Heart right ventricle (tissue), 16 donors: ENCODE measurements at regions of chr9 and their contacts with region 1.

Region 1: GRCh38 chr9:91407580-91408318 is 15.9 kb downstream of the NFIL3 start:
- DNase-seq: no peak
- ATAC-seq: peak in 6 of 8 donors; percentile 51 to 87 (median 80)
- H3K4me3 ChIP-seq: no peak overlapping the region
- H3K27ac ChIP-seq: peak overlapping the region in 5 of 10 donors; percentile 7 to 43 (median 31)
- H3K4me1 ChIP-seq: peaks cover 0 to 48% (median 0%) of the 10 kb centered on the region in 9 donors
- H3K27me3 ChIP-seq: no peaks in the 10 kb centered on the region
- CTCF ChIP-seq: no peak

Region 2: DNA sequence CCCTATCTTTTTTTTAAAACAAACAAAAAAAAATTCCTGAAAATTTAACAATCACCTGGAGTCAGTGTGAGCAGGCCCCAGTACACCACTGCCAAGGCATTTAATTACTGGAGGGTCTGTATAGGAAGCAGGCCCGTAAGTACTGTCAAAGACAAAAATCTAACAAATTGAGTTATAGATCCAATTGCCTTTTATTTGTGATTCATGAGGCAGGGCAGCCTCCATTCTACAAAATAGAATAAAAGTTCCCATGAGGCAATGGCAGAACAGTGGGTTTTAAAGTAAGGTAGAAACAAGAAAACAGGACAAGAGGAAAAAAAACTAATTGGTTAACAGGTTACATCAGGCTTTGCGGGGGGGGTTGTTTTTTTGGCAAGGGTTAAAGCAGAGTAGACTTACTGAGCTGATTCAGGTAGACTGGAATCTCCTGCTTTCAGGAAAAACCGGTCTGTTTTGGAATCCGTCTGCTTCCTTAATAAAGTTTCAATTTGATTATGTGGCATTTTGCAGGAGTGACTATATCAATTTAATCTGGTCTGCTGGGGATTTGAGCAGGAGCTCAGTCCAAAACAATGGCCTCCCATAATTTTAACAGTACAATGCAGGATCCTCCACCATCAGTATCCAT is 94.9 kb before region 1 on chr9:
- intact Hi-C with region 1: no loop called
- DNase-seq: no peak
- ATAC-seq: no peak
- H3K4me3 ChIP-seq: no peak overlapping the region
- H3K27ac ChIP-seq: no peak overlapping the region
- H3K4me1 ChIP-seq: no peaks in the 10 kb centered on the region
- H3K27me3 ChIP-seq: no peaks in the 10 kb centered on the region
- CTCF ChIP-seq: no peak

Region 3: DNA sequence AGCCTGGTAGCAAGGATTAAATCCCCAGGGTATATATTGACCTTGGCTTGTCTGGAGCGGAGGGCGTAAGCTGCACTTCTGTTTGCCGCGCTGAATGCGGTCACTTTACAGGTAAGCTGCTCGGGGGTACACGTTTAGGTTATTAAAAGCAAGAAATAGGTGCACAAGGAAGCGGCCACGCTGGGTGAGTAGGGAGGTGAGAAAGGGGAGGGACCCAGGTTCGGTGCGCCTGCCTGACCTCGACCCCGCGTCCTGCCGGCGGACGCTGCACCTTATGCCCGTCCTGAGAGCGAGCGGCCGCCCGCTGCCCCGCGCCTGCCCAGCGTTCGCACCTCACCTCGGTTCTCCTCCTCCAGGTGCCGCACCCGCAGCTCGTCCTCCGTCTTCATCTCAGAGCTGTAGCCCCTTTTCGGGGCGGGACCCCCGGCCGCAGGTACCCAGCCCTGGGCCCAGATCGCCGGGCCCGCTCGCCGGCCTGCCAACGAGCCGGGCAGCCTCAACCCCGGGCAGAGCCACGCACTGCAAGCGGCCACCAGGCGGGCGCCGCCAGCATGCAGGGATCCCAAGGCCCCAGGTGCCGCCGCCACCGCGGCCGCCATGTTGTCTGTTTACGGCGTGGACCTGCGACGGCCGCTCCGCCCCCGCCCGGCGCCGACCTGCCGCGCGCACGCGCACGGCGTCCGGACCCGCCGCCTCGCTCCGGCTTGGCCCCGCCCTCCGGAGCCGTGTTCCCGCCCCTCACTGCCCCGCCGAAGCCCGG is 46.3 kb before region 1 on chr9 and contains the start of gene AUH:
- intact Hi-C with region 1: loop called in 2 of 10 experiments (anchors 5 to 10 kb)
- DNase-seq: peak; percentile 79 to 90
- ATAC-seq: peak; percentile 96 to 100 (median 98)
- H3K4me3 ChIP-seq: peak within 1 kb of the TSS; percentile 92 to 100 (median 98)
- H3K27ac ChIP-seq: peak within 1 kb of the TSS; percentile 85 to 97 (median 92)
- H3K4me1 ChIP-seq: peaks cover 0 to 43% (median 34%) of the 10 kb centered on the region in 9 donors
- H3K27me3 ChIP-seq: no peaks in the 10 kb centered on the region
- CTCF ChIP-seq: peak in 3 of 9 donors; percentile 7 to 17 (median 12)
- total RNA-seq, gene AUH: 30.6 to 51.3 (median 44.2) TPM

Region 4: DNA sequence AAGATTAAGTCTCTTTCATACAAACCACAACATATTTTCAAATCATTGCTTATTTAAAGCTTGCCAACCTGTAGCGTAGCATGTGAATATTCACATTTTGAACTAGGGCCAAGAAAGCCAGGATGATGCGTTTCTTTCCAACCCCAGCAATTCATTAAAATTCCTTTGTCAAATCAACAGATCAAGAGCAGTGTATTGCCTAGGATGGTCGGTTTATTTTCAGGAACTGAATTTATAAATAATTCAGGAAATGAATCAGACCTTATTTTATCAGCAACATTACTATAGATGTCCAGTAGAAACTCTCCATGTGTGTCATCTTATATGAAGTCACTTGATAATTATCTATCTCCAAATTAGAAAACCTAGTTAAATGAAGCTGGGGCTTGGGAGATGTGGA is 32.8 kb before region 1 on chr9:
- intact Hi-C with region 1: no loop called
- DNase-seq: no peak
- ATAC-seq: no peak
- H3K4me3 ChIP-seq: no peak overlapping the region
- H3K27ac ChIP-seq: no peak overlapping the region
- H3K4me1 ChIP-seq: peaks cover 0 to 18% (median 0%) of the 10 kb centered on the region in 9 donors
- H3K27me3 ChIP-seq: no peaks in the 10 kb centered on the region
- CTCF ChIP-seq: no peak